ENCODE measurements at regions of chr4 and their contacts with region 1.

Region 1: DNA sequence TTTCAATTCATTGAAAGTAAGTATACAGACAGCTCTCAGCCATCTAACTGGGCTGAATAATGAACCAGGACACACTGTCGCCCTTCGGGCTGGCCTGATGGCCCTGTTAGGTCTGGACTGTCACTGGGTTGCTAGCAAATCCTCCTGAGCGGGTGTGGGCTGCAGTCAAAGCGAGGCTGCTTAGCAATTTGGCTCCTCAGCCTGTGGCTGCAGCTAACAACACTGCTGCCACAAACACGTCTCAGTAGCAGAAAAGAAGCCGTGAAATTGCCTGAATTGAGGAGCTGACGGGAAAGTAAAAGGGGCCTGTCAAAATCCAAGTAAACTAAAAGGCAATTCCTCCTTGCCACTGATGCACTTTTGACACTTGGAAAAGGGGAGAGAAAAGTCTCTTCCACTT is 72.8 kb downstream of the SMIM20 start:
- DNase-seq: no peak
- ATAC-seq: no peak
- H3K4me3 Mint-ChIP-seq: no peak overlapping the region
- H3K27ac Mint-ChIP-seq: no peak overlapping the region
- H3K4me1 Mint-ChIP-seq: peaks cover 12% of the 10 kb centered on the region
- H3K27me3 Mint-ChIP-seq: peaks cover 8% of the 10 kb centered on the region

Region 2: GRCh38 chr4:25834411-25835107 is 152.2 kb before region 1 on chr4:
- CTCF ChIA-PET with region 1: no interaction called
- POLR2A ChIA-PET with region 1: no interaction called
- DNase-seq: no peak
- ATAC-seq: no peak
- H3K4me3 Mint-ChIP-seq: no peak overlapping the region
- H3K27ac Mint-ChIP-seq: no peak overlapping the region
- H3K4me1 Mint-ChIP-seq: no peaks in the 10 kb centered on the region
- H3K27me3 Mint-ChIP-seq: no peaks in the 10 kb centered on the region

Region 3: GRCh38 chr4:25925486-25926201 is 61.2 kb before region 1 on chr4:
- CTCF ChIA-PET with region 1: interaction called, 26 read pairs
- POLR2A ChIA-PET with region 1: no interaction called
- DNase-seq: peak; percentile 32
- ATAC-seq: no peak
- H3K4me3 Mint-ChIP-seq: no peak overlapping the region
- H3K27ac Mint-ChIP-seq: no peak overlapping the region
- H3K4me1 Mint-ChIP-seq: peaks cover 7% of the 10 kb centered on the region
- H3K27me3 Mint-ChIP-seq: no peaks in the 10 kb centered on the region

Region 4: GRCh38 chr4:25970226-25970675 is 16.6 kb before region 1 on chr4:
- CTCF ChIA-PET with region 1: interaction called, 16 read pairs
- POLR2A ChIA-PET with region 1: no interaction called
- DNase-seq: no peak
- ATAC-seq: no peak
- H3K4me3 Mint-ChIP-seq: no peak overlapping the region
- H3K27ac Mint-ChIP-seq: no peak overlapping the region
- H3K4me1 Mint-ChIP-seq: no peaks in the 10 kb centered on the region
- H3K27me3 Mint-ChIP-seq: peaks cover 10% of the 10 kb centered on the region

Region 5: GRCh38 chr4:26000274-26000950 is 13.6 kb after region 1 on chr4:
- CTCF ChIA-PET with region 1: interaction called, 14 read pairs
- POLR2A ChIA-PET with region 1: no interaction called
- DNase-seq: no peak
- ATAC-seq: no peak
- H3K4me3 Mint-ChIP-seq: no peak overlapping the region
- H3K27ac Mint-ChIP-seq: no peak overlapping the region
- H3K4me1 Mint-ChIP-seq: no peaks in the 10 kb centered on the region
- H3K27me3 Mint-ChIP-seq: peaks cover 5% of the 10 kb centered on the region

Region 6: GRCh38 chr4:26005764-26006163 is 19.0 kb after region 1 on chr4:
- CTCF ChIA-PET with region 1: interaction called, 14 read pairs
- POLR2A ChIA-PET with region 1: no interaction called
- DNase-seq: no peak
- ATAC-seq: no peak
- H3K4me3 Mint-ChIP-seq: no peak overlapping the region
- H3K27ac Mint-ChIP-seq: no peak overlapping the region
- H3K4me1 Mint-ChIP-seq: no peaks in the 10 kb centered on the region
- H3K27me3 Mint-ChIP-seq: peaks cover 13% of the 10 kb centered on the region

Region 7: DNA sequence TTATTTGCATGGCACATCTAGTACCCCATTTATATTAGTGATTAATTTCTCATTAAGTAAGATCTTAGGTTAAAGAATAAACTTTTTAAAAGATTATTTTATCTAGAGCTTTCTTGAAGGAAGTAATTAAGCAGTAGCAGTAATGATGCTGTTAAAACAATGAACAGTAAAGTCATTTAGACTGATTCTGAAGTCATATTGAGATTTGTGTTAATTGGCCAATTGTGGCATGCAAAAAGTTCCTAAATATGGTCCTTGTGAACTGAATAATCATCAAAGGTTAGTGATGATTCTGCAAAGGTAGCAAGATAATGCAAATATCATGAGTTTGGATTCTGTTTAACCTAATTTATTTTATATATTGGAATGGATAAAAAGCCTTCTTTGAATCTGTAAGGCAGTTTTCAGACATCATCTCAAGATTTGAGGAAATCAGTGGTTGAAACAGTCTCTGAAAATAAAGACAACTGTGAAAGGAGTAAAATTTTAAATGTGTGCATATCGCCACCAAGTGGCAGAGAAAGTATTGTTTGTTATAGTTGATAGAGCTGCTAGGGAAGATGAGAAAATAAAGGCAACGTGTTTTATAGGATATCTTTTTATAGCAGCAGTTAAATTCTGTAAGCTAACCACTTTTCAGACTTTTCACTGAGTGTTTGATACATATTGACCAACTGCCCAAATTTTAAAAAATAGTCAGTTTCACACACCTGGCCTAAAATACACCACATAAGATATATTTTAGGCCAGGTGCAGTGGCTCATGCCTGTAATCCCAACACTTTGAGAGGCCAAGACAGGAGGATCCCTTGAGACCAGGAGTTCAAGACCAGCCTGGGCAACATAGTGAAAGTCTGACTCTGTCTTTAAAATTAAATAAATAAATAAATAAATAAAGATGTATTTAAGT is 423.8 kb after region 1 on chr4:
- CTCF ChIA-PET with region 1: interaction called, 38 read pairs
- POLR2A ChIA-PET with region 1: no interaction called
- DNase-seq: peak; percentile 65
- ATAC-seq: peak; percentile 67
- H3K4me3 Mint-ChIP-seq: no peak overlapping the region
- H3K27ac Mint-ChIP-seq: no peak overlapping the region
- H3K4me1 Mint-ChIP-seq: peaks cover 5% of the 10 kb centered on the region
- H3K27me3 Mint-ChIP-seq: no peaks in the 10 kb centered on the region